Activated CD4-positive, alpha-beta T cell treated with anti-CD3 and anti-CD28 coated beads for 36 hours (primary cell): ENCODE measurements at regions of chr11 and their contacts with region 1.

Region 1: GRCh38 chr11:73787643-73788537 is at the start of gene MRPL48:
- DNase-seq: peak; percentile 95
- ATAC-seq: peak; percentile 99
- H3K4me3 Mint-ChIP-seq: peak within 1 kb of the TSS; percentile 92
- H3K27ac Mint-ChIP-seq: peak within 1 kb of the TSS; percentile 99
- H3K4me1 Mint-ChIP-seq: peaks cover 9% of the 10 kb centered on the region
- H3K27me3 Mint-ChIP-seq: no peaks in the 10 kb centered on the region
- total RNA-seq, gene MRPL48: 48.5 to 52.0 TPM

Region 2: GRCh38 chr11:73729594-73730206 is 58.2 kb before region 1 on chr11:
- CTCF ChIA-PET with region 1: no interaction called
- POLR2A ChIA-PET with region 1: no interaction called
- intact Hi-C with region 1: loop called in 1 of 2 experiments (anchors 5 kb)
- DNase-seq: peak; percentile 36
- ATAC-seq: no peak
- H3K4me3 Mint-ChIP-seq: no peak overlapping the region
- H3K27ac Mint-ChIP-seq: no peak overlapping the region
- H3K4me1 Mint-ChIP-seq: peaks cover 36% of the 10 kb centered on the region
- H3K27me3 Mint-ChIP-seq: no peaks in the 10 kb centered on the region

Region 3: GRCh38 chr11:74170694-74171629 is 383.1 kb after region 1 on chr11 and contains the starts of genes C2CD3 and PPME1:
- CTCF ChIA-PET with region 1: no interaction called
- POLR2A ChIA-PET with region 1: no interaction called
- intact Hi-C with region 1: loop called in 1 of 2 experiments (anchors 1 kb)
- DNase-seq: peak; percentile 98
- ATAC-seq: peak; percentile 96
- H3K4me3 Mint-ChIP-seq: no peak within 1 kb of the TSS
- H3K27ac Mint-ChIP-seq: no peak within 1 kb of the TSS
- H3K4me1 Mint-ChIP-seq: peaks cover 16% of the 10 kb centered on the region
- H3K27me3 Mint-ChIP-seq: no peaks in the 10 kb centered on the region
- total RNA-seq, gene C2CD3: 23.9 to 28.0 TPM
- total RNA-seq, gene PPME1: 54.2 to 61.5 TPM

Region 4: GRCh38 chr11:74592441-74593362 is 804.8 kb after region 1 on chr11 and contains the start of gene POLD3:
- CTCF ChIA-PET with region 1: no interaction called
- POLR2A ChIA-PET with region 1: no interaction called
- intact Hi-C with region 1: loop called in 1 of 2 experiments (anchors 5 kb)
- DNase-seq: peak; percentile 98
- ATAC-seq: peak; percentile 96
- H3K4me3 Mint-ChIP-seq: peak within 1 kb of the TSS; percentile 93
- H3K27ac Mint-ChIP-seq: peak within 1 kb of the TSS; percentile 96
- H3K4me1 Mint-ChIP-seq: peaks cover 27% of the 10 kb centered on the region
- H3K27me3 Mint-ChIP-seq: no peaks in the 10 kb centered on the region
- total RNA-seq, gene POLD3: 70.0 to 79.8 TPM